K562 (cell line): ENCODE measurements at regions of chr12 and their contacts with region 1.

Region 1: DNA sequence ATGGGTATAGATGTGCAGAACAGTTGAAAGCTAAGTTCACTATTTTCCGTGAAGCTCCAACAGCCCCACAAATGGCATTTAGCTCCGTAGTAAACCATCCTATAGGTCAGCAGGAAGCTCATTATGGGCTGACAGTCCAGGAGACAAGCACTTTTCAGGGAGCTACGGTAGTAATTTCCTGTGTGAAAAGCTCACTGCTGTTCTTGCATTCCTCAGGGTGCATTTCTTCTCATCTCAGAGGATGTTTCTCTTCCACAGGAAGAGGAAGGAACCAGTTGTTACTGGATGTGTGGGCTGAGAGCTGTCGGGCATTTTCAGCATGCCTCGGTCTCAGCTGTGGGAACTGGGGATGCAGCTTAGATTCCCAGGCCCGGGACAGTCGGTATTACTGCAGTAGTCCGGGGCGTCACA is 72.8 kb downstream of the GALNT4 start:
- DNase-seq: no peak
- ATAC-seq: peak; percentile 23; the same call in 1 of the 3 replicates
- H3K4me3 ChIP-seq: no peak overlapping the region
- H3K27ac ChIP-seq: no peak overlapping the region
- H3K4me1 ChIP-seq: peaks cover 0 to 4% of the 10 kb centered on the region in 2 experiments; a peak in 2 of 5 replicates
- H3K27me3 ChIP-seq: no peaks in the 10 kb centered on the region
- CTCF ChIP-seq: no peak
- EP300 ChIP-seq: no peak
- POLR2A ChIP-seq: no peak
- RAD21 ChIP-seq: no peak

Region 2: GRCh38 chr12:89051065-89051677 is 400.7 kb before region 1 on chr12:
- CTCF ChIA-PET with region 1: no interaction called
- POLR2A ChIA-PET with region 1: no interaction called
- in situ Hi-C with region 1: loop called (anchors 10 kb)
- intact Hi-C with region 1: no loop called
- DNase-seq: peak; percentile 30 to 53 (median 50)
- ATAC-seq: peak; percentile 49; the same call in 1 of the 3 replicates
- H3K4me3 ChIP-seq: no peak overlapping the region
- H3K27ac ChIP-seq: no peak overlapping the region
- H3K4me1 ChIP-seq: no peaks in the 10 kb centered on the region
- H3K27me3 ChIP-seq: no peaks in the 10 kb centered on the region
- CTCF ChIP-seq: peak; percentile 37 to 58 (median 53); a peak in 5 of 6 replicates
- EP300 ChIP-seq: no peak
- POLR2A ChIP-seq: no peak
- RAD21 ChIP-seq: peak; percentile 95 to 96

Region 3: DNA sequence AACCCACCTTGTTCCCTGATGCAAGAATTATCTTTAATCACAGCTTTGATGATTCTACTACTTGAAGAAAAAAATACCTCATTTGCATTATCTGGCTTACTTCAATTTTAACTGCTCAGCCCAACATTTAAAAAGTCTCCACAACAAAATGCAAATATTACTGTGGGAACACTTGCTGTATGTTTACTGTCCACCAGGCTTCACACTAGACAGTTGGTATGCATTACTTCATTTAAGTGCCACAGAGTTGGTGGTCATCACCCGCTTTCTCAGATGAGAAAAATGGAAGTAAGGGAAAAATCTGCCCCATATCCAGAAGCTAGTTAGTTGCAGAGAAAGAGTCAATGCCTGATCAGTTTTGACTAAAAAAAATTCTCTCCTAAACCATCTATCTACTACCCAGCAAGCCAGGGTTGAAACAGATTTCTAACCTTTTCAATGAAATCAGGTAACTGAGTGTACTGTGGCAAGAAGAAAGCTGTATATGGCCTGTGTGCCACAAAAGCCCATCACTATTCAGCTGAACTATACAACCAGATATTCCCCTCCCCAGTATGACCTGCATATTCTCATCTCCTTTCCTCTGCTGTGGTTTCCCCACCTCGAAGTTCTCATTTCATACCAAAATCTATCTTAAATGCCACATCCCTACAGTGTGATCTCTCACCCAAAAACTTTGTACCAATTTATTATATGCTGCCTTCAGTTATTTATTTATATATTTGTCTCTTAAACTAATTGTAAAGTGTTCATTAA is 166.4 kb after region 1 on chr12:
- CTCF ChIA-PET with region 1: no interaction called
- POLR2A ChIA-PET with region 1: no interaction called
- in situ Hi-C with region 1: no loop called
- intact Hi-C with region 1: no loop called
- DNase-seq: no peak
- ATAC-seq: peak; percentile 59; the same call in 2 of the 3 replicates
- H3K4me3 ChIP-seq: no peak overlapping the region
- H3K27ac ChIP-seq: no peak overlapping the region
- H3K4me1 ChIP-seq: peaks cover 0 to 4% of the 10 kb centered on the region in 2 experiments; a peak in 2 of 5 replicates
- H3K27me3 ChIP-seq: no peaks in the 10 kb centered on the region
- CTCF ChIP-seq: peak in 1 of 3 experiments; percentile 9; a peak in 1 of 6 replicates
- EP300 ChIP-seq: no peak
- POLR2A ChIP-seq: no peak
- RAD21 ChIP-seq: 0 out of 4 replicates have a peak, but pooled peaks of 1 of the 2 experiments have one; percentile 3